ENCODE measurements at regions of chrX and their contacts with region 1.

Region 1: GRCh38 chrX:132609394-132609793 is 120.6 kb upstream of the MBNL3 start:
- DNase-seq: no peak
- ATAC-seq: no peak
- H3K4me3 ChIP-seq: no peak overlapping the region
- H3K4me3 Mint-ChIP-seq: no peak overlapping the region
- H3K27ac ChIP-seq: no peak overlapping the region
- H3K27ac Mint-ChIP-seq: no peak overlapping the region
- H3K4me1 ChIP-seq: no peaks in the 10 kb centered on the region
- H3K4me1 Mint-ChIP-seq: no peaks in the 10 kb centered on the region
- H3K27me3 ChIP-seq: no peaks in the 10 kb centered on the region
- H3K27me3 Mint-ChIP-seq: peaks cover 0 to 22% of the 10 kb centered on the region in 2 donors

Region 2: DNA sequence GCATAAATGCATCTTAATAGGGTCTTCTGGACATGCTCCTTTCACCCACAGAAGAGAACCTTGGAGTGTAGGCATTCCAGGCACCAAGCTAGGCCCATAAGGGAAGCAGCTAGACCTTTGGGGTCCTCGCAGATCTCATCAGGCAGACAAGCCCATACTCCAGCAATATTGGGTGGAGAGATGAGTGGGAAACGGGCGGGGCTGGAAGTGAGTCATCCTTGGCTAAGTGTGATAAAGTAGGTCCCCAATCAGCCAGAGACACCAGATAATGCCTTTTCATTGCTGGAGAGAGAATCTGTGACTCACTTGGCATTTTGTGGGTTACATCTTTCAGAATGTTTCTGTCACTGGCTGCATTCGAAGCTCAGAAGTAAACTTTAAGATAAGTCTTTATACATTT is 12.7 kb after region 1 on chrX:
- CTCF ChIA-PET with region 1: interaction called, 4 to 6 read pairs
- POLR2A ChIA-PET with region 1: interaction called in 1 of 2 experiments, 11 read pairs
- DNase-seq: no peak
- ATAC-seq: no peak
- H3K4me3 ChIP-seq: no peak overlapping the region
- H3K4me3 Mint-ChIP-seq: no peak overlapping the region
- H3K27ac ChIP-seq: no peak overlapping the region
- H3K27ac Mint-ChIP-seq: peak overlapping the region in 1 of 2 donors; percentile 16
- H3K4me1 ChIP-seq: no peaks in the 10 kb centered on the region
- H3K4me1 Mint-ChIP-seq: peaks cover 0 to 2% (median 2%) of the 10 kb centered on the region in 3 donors
- H3K27me3 ChIP-seq: no peaks in the 10 kb centered on the region
- H3K27me3 Mint-ChIP-seq: peaks cover 0 to 19% of the 10 kb centered on the region in 2 donors

Measured in T-cell (primary cell).